ENCODE measurements at regions of chr11 and their contacts with region 1.

Region 1: GRCh38 chr11:6022956-6023355 is 7.6 kb downstream of the OR56A1 start:
- DNase-seq: no peak
- H3K4me3 ChIP-seq: no peak overlapping the region
- H3K27ac ChIP-seq: no peak overlapping the region
- H3K4me1 ChIP-seq: no peaks in the 10 kb centered on the region
- H3K27me3 ChIP-seq: no peaks in the 10 kb centered on the region
- CTCF ChIP-seq: peak; percentile 74

Region 2: DNA sequence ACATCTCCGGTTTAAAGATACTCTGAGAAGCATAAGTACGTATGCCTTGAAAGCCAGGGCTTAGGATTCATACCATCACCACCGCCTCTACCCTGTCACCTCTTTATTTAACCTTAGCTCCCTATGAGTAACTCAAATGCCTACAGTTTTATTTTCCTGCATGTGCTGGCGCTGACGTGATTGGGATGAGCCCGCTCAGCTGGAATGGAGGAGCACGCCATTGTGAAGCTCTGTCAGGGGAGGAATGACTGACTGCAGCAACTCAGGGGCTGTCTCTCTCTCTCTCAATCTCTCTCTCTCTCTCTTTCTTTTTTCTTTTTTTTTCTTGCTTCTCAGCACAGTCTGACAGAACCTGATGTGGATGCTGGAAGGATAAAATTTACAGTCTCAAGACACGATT is 284.9 kb after region 1 on chr11:
- intact Hi-C with region 1: loop called (anchors 2 kb)
- DNase-seq: no peak
- H3K4me3 ChIP-seq: no peak overlapping the region
- H3K27ac ChIP-seq: no peak overlapping the region
- H3K4me1 ChIP-seq: no peaks in the 10 kb centered on the region
- H3K27me3 ChIP-seq: peaks cover 3% of the 10 kb centered on the region
- CTCF ChIP-seq: no peak

Region 3: DNA sequence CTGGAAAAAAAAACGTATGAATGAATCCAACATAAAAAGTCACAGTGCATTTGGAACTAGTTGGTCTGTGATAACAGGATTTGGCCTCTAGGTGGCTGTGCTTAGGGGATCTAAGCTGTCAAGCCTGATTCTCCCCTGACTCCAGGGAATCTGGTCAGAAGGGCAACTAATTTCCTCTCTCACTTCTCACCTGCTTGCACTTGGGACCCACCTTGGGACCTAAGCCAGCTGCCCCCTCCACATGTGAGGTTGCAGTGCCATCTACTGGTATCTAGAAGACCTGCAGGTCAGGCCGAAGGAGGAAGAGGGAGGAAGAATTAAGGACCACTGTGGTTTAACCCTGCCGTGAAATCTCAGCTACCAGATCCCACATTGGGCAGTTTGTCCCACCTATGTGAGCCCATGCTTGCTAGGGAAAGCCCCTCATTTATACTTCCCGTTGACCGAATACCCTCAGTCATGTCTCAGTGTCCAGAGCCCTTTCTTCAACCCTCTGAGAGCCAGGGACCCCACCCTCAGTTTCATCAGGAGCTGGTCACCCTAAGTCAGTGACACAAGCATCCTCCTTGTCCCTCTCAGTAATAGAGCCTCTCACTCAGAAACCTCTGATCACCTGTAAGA is 330.5 kb after region 1 on chr11:
- intact Hi-C with region 1: loop called (anchors 5 kb)
- DNase-seq: peak; percentile 24
- H3K4me3 ChIP-seq: no peak overlapping the region
- H3K27ac ChIP-seq: no peak overlapping the region
- H3K4me1 ChIP-seq: peaks cover 15% of the 10 kb centered on the region
- H3K27me3 ChIP-seq: no peaks in the 10 kb centered on the region
- CTCF ChIP-seq: peak; percentile 96